Activated B cell treated with CpG ODN at 0.5 μM for 24 hours (primary cell): ENCODE measurements at regions of chr3 and their contacts with region 1.

Region 1: GRCh38 chr3:188584162-188584529 is 430.2 kb downstream of the LPP start:
- DNase-seq: no peak
- ATAC-seq: peak; percentile 8
- H3K4me3 Mint-ChIP-seq: no peak overlapping the region
- H3K27ac Mint-ChIP-seq: no peak overlapping the region
- H3K4me1 Mint-ChIP-seq: peaks cover 31% of the 10 kb centered on the region
- H3K27me3 Mint-ChIP-seq: no peaks in the 10 kb centered on the region
- CTCF ChIP-seq: no peak

Region 2: GRCh38 chr3:187519428-187519890 is 1064.7 kb before region 1 on chr3:
- CTCF ChIA-PET with region 1: no interaction called
- POLR2A ChIA-PET with region 1: no interaction called
- intact Hi-C with region 1: no loop called
- DNase-seq: no peak
- ATAC-seq: no peak
- H3K4me3 Mint-ChIP-seq: no peak overlapping the region
- H3K27ac Mint-ChIP-seq: no peak overlapping the region
- H3K4me1 Mint-ChIP-seq: peaks cover 7% of the 10 kb centered on the region
- H3K27me3 Mint-ChIP-seq: peaks cover 7% of the 10 kb centered on the region
- CTCF ChIP-seq: no peak

Region 3: GRCh38 chr3:187919048-187919447 is 665.1 kb before region 1 on chr3:
- CTCF ChIA-PET with region 1: no interaction called
- POLR2A ChIA-PET with region 1: no interaction called
- intact Hi-C with region 1: loop called (anchors 1 kb)
- DNase-seq: peak; percentile 36
- ATAC-seq: peak; percentile 89
- H3K4me3 Mint-ChIP-seq: peak overlapping the region; percentile 77
- H3K27ac Mint-ChIP-seq: peak overlapping the region; percentile 86
- H3K4me1 Mint-ChIP-seq: peaks cover 32% of the 10 kb centered on the region
- H3K27me3 Mint-ChIP-seq: peaks cover 15% of the 10 kb centered on the region
- CTCF ChIP-seq: no peak

Region 4: GRCh38 chr3:188309437-188310269 is 274.5 kb before region 1 on chr3:
- CTCF ChIA-PET with region 1: no interaction called
- POLR2A ChIA-PET with region 1: interaction called, 7 read pairs
- intact Hi-C with region 1: loop called (anchors 5 kb)
- DNase-seq: no peak
- ATAC-seq: peak; percentile 78
- H3K4me3 Mint-ChIP-seq: peak overlapping the region; percentile 72
- H3K27ac Mint-ChIP-seq: peak overlapping the region; percentile 91
- H3K4me1 Mint-ChIP-seq: peaks cover 39% of the 10 kb centered on the region
- H3K27me3 Mint-ChIP-seq: no peaks in the 10 kb centered on the region
- CTCF ChIP-seq: no peak

Region 5: DNA sequence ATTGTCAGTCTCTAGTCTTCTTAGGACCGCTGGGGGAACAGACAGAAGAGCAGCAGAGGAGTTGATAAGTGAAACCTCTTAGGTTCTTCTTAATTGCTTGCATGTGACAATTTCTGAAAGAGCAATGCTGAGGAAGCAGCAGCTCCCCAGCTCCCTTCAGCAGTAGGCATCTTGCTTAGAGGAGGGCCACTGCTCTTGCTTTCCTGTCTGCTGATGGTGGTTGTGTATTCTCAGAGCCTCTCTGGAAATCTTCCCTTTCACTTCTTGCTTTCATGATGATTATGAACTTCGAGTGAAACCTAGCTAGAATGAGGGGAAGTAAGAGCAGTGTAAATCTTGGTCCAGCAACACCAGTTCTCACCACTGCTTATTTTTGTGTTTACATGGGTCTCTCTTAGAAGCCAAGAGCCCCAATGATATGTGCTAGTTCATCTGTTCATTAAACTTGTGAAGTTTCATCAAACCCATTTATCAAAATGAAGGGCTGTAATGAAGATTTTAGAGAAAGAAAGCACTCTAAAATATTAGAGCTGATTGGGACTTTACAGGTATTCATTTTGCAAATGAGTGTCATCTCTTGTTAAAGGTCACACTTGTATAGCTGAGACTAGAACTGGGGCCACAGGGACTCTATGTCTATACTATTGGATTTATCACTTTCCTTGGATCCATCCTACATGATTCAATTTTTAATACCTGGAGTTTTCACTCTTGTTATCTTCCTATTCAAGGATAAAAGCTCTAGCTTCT is 183.5 kb before region 1 on chr3:
- CTCF ChIA-PET with region 1: interaction called, 3 read pairs
- POLR2A ChIA-PET with region 1: interaction called, 17 read pairs
- intact Hi-C with region 1: loop called (anchors 2 kb)
- DNase-seq: no peak
- ATAC-seq: peak; percentile 82
- H3K4me3 Mint-ChIP-seq: peak overlapping the region; percentile 56
- H3K27ac Mint-ChIP-seq: peak overlapping the region; percentile 91
- H3K4me1 Mint-ChIP-seq: peaks cover 93% of the 10 kb centered on the region
- H3K27me3 Mint-ChIP-seq: no peaks in the 10 kb centered on the region
- CTCF ChIP-seq: no peak

Region 6: DNA sequence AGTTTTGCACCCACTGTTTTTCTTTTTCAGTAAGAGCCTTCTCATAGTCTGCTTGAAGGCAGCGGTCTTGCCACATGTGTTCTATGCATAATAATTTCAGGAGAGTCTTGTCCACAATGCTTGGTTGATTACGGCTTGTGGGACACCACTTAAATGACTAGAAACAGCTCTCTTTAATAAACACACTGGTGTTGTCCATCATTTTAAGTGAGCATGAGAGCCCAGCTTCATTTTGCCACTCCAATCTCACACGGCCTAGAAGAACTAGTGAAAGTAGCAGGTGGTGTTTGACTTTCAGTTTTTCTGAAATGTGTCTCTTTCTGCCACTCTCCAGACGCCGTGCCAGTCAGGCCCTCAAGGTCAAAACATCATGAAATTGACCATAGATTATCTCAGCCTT is 138.1 kb before region 1 on chr3:
- CTCF ChIA-PET with region 1: no interaction called
- POLR2A ChIA-PET with region 1: interaction called, 10 read pairs
- intact Hi-C with region 1: no loop called
- DNase-seq: no peak
- ATAC-seq: peak; percentile 59
- H3K4me3 Mint-ChIP-seq: peak overlapping the region; percentile 57
- H3K27ac Mint-ChIP-seq: peak overlapping the region; percentile 88
- H3K4me1 Mint-ChIP-seq: peaks cover 76% of the 10 kb centered on the region
- H3K27me3 Mint-ChIP-seq: no peaks in the 10 kb centered on the region
- CTCF ChIP-seq: no peak

Region 7: DNA sequence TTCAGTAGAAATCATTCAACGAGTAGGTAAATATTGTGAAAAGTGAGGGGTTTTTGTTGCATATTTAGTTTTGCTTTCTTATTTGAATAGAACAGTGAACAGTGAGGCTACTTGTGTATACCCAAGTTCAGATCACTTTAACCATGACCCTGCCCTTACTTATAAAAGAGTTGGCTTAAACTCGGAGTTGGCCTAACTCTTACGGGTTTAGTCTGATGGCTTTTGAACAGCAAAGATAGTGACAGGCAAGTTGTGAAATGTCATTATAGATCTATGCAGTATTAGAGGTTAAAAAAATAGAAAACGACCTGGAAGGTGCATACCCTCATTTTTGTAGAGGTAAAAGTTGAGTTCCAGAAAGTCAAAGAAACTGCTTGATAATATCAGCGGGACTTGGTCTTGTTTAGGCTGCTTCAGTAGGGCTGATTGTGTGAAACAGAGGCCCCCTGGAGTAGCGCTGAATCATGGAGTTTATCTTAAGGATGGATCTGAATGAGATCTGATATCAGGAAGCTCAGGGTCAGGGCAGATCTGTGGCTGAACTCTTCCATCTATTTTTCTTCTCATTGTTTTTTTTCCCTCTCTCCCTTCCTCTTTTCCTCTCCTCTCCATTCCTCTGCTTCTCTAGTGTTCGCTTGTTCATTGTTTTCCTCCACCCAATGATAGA is 70.4 kb before region 1 on chr3:
- CTCF ChIA-PET with region 1: no interaction called
- POLR2A ChIA-PET with region 1: no interaction called
- intact Hi-C with region 1: no loop called
- DNase-seq: no peak
- ATAC-seq: no peak
- H3K4me3 Mint-ChIP-seq: no peak overlapping the region
- H3K27ac Mint-ChIP-seq: no peak overlapping the region
- H3K4me1 Mint-ChIP-seq: peaks cover 5% of the 10 kb centered on the region
- H3K27me3 Mint-ChIP-seq: no peaks in the 10 kb centered on the region
- CTCF ChIP-seq: no peak

Region 8: GRCh38 chr3:188697127-188697526 is 113.0 kb after region 1 on chr3:
- CTCF ChIA-PET with region 1: no interaction called
- POLR2A ChIA-PET with region 1: interaction called, 9 read pairs
- intact Hi-C with region 1: loop called (anchors 2 kb)
- DNase-seq: no peak
- ATAC-seq: peak; percentile 80
- H3K4me3 Mint-ChIP-seq: peak overlapping the region; percentile 20
- H3K27ac Mint-ChIP-seq: peak overlapping the region; percentile 86
- H3K4me1 Mint-ChIP-seq: peaks cover 72% of the 10 kb centered on the region
- H3K27me3 Mint-ChIP-seq: no peaks in the 10 kb centered on the region
- CTCF ChIP-seq: no peak

Region 9: DNA sequence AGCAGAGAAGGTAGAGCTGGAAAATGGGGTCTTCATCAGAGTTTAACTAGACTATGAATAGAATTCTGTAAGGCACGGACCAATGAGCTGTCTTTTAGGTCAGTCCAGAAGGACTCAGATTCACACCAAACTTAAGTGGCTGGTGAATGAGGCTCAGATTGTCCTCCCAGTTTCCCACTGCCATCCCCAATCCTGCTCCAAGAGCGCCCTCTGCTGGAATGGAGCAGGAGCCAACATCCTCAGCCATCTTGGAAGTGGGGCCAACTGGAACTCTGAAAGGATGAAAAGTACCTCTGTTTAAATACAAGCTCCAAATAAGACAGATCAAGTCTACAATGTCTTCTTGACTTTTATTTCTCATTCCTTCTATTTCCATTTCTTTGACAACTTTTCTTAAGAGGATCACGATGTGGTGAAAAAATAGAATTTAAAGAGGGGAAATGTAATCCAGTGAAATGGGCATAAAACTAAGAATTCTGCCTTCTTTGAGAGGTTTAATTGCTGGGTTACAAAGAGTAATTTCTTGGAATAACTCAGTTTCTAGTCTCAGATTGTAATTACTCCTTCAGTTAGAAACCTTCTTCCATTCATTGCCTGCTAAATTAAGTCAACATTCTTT is 370.6 kb after region 1 on chr3:
- CTCF ChIA-PET with region 1: interaction called, 26 read pairs
- POLR2A ChIA-PET with region 1: interaction called, 7 read pairs
- intact Hi-C with region 1: loop called (anchors 2 kb)
- DNase-seq: peak; percentile 60
- ATAC-seq: peak; percentile 66
- H3K4me3 Mint-ChIP-seq: no peak overlapping the region
- H3K27ac Mint-ChIP-seq: no peak overlapping the region
- H3K4me1 Mint-ChIP-seq: peaks cover 25% of the 10 kb centered on the region
- H3K27me3 Mint-ChIP-seq: peaks cover 1% of the 10 kb centered on the region
- CTCF ChIP-seq: no peak

Region 10: GRCh38 chr3:189121092-189121491 is 536.9 kb after region 1 on chr3:
- CTCF ChIA-PET with region 1: no interaction called
- POLR2A ChIA-PET with region 1: no interaction called
- intact Hi-C with region 1: no loop called
- DNase-seq: no peak
- ATAC-seq: no peak
- H3K4me3 Mint-ChIP-seq: no peak overlapping the region
- H3K27ac Mint-ChIP-seq: no peak overlapping the region
- H3K4me1 Mint-ChIP-seq: no peaks in the 10 kb centered on the region
- H3K27me3 Mint-ChIP-seq: peaks cover 1% of the 10 kb centered on the region
- CTCF ChIP-seq: no peak